ENCODE measurements at regions of chr7 and their contacts with region 1.

Region 1: DNA sequence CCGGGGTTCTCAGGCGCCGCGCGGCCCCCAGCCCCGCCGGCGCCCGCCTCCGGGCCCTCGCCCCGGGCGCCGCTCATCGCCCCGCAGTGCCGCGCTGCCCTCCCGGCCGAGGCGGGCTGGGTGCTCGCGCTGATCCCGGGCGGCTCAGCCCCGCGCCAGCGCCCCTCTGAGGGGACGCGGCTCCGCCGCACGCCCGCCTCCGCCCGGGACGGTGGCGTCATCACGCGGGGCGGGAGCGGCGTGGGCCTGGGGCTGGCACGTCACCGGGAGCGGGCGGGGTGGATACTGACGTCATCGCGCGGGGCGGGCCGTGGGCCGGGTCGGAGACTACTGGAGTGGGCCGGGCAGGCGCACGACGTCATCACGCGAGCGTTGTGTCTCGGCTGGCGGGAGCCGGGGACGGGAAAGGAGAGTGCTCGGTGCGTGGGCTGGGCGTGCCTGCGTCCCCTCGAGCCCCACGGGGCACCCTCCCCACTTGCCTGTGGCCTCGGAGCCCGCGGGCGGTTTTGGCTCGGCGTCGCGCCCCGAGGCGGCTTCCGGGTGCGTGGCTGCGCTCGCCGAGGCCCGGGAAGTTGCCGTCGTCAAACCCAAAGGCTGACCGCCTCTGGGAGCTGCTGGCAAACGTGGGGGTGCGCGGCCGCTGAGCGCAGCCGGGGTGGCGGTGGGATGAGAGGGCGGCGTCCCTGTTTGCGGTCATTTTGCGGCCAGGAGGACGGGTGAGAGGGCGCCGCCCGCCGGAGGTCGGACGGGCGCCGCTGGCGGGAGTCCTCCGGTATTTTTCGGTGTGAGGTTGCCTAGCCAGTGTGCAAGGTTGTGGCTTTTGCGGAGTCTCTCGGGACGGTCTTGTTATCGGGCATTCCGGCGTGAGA is at the start of gene ESYT2:
- DNase-seq: peak; percentile 95 to 100 (median 99)
- ATAC-seq: peak; percentile 78 to 85 (median 84)
- H3K4me3 ChIP-seq: peak within 1 kb of the TSS; percentile 71 to 75
- H3K4me3 Mint-ChIP-seq: peak within 1 kb of the TSS; percentile 97 to 99 (median 98)
- H3K27ac ChIP-seq: peak within 1 kb of the TSS; percentile 96
- H3K27ac Mint-ChIP-seq: peak within 1 kb of the TSS; percentile 83 to 94
- H3K4me1 ChIP-seq: peaks cover 14 to 32% of the 10 kb centered on the region in 2 experiments
- H3K4me1 Mint-ChIP-seq: peaks cover 26 to 46% (median 37%) of the 10 kb centered on the region in 3 donors
- H3K27me3 ChIP-seq: no peaks in the 10 kb centered on the region
- H3K27me3 Mint-ChIP-seq: no peaks in the 10 kb centered on the region
- total RNA-seq, gene ESYT2: 99.0 to 122 (median 116) TPM

Region 2: GRCh38 chr7:158754746-158755444 is 74.7 kb before region 1 on chr7:
- CTCF ChIA-PET with region 1: no interaction called
- POLR2A ChIA-PET with region 1: no interaction called
- DNase-seq: no peak
- ATAC-seq: no peak
- H3K4me3 ChIP-seq: no peak overlapping the region
- H3K4me3 Mint-ChIP-seq: no peak overlapping the region
- H3K27ac ChIP-seq: no peak overlapping the region
- H3K27ac Mint-ChIP-seq: no peak overlapping the region
- H3K4me1 ChIP-seq: no peaks in the 10 kb centered on the region
- H3K4me1 Mint-ChIP-seq: peaks cover 0 to 4% (median 0%) of the 10 kb centered on the region in 3 donors
- H3K27me3 ChIP-seq: no peaks in the 10 kb centered on the region
- H3K27me3 Mint-ChIP-seq: no peaks in the 10 kb centered on the region

Region 3: DNA sequence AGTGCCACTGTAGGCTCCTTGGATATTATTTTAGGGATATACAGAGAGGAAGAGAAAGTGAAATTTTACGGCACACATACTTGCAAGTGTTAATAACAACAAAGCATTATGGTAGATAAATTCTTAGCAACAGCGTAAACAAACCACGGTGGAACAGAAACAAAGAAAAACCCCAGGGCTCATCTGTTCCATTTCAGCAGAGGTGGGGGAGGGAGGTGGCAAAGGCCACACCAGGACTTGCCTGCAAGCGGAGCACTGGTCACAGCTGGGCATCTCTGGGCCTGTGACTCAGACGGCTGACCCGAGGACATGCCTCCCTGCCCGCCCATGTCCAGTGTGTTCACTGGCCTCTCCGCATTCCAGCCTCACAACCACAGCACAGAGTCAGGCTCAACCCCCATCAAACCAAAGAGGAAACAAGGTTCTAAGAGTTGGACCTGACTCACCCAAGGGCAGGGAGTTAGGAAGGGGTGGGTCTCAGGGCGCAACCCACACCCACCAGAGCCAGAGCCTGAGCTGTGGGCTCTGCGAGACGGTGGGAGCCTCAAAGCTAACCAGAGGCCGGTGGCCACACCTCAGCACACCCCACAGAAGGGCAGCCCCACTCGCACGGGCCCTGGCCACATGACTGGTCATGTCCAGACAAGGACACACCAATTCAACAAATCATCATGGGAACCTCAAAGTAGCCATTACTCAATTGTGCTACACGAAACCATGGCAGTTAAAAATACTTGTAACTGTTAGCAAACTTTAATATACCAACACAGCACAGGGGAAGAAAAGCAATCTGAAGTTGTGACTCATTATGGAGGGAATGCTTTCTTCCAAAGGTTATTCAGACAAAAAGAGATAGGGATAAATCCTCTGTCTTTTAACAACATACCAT is 11.0 kb before region 1 on chr7:
- CTCF ChIA-PET with region 1: interaction called, 3 to 9 read pairs
- POLR2A ChIA-PET with region 1: interaction called, 12 to 124 read pairs
- DNase-seq: peak in 34 of 35 experiments; percentile 42 to 89 (median 68)
- ATAC-seq: peak; percentile 70 to 78 (median 74)
- H3K4me3 ChIP-seq: peak overlapping the region; percentile 35 to 40
- H3K4me3 Mint-ChIP-seq: peak overlapping the region; percentile 84 to 88 (median 87)
- H3K27ac ChIP-seq: peak overlapping the region; percentile 99
- H3K27ac Mint-ChIP-seq: peak overlapping the region; percentile 95 to 98
- H3K4me1 ChIP-seq: peaks cover 60 to 73% of the 10 kb centered on the region in 2 experiments
- H3K4me1 Mint-ChIP-seq: peaks cover 89 to 90% (median 90%) of the 10 kb centered on the region in 3 donors
- H3K27me3 ChIP-seq: no peaks in the 10 kb centered on the region
- H3K27me3 Mint-ChIP-seq: no peaks in the 10 kb centered on the region

Region 4: DNA sequence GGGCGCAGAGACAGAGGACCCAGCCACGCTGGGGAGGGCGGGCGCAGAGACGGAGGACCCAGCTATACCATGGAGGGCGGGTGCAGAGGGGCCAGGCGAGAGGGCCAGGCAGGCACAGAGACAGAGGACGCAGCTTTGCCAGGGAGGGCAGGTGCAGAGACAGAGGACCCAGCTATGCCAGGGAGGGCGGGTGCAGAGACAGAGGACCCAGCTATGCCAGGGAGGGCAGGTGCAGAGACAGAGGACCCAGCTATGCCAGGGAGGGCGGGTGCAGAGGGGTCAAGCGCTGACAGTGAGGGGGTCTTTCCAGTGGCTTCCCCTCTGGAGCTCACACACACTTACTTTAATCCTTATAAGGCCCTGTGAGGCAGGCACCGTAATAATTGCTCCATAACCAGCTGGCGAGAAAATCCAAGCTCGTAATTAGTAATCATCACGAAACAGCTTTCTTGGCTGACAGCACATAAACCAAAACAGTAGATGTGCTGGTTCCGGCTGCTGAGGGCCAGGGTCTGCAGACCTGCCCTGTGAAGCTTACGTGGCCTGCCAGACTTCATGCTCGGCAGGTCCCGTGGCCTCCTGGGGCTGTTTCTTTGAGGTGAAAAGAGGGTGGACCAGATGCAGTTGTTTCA is 177.9 kb after region 1 on chr7:
- CTCF ChIA-PET with region 1: no interaction called
- POLR2A ChIA-PET with region 1: no interaction called
- DNase-seq: no peak
- ATAC-seq: no peak
- H3K4me3 ChIP-seq: no peak overlapping the region
- H3K4me3 Mint-ChIP-seq: no peak overlapping the region
- H3K27ac ChIP-seq: no peak overlapping the region
- H3K27ac Mint-ChIP-seq: no peak overlapping the region
- H3K4me1 ChIP-seq: peaks cover 7 to 8% of the 10 kb centered on the region in 2 experiments
- H3K4me1 Mint-ChIP-seq: peaks cover 5 to 18% (median 15%) of the 10 kb centered on the region in 3 donors
- H3K27me3 ChIP-seq: peaks cover 0 to 14% of the 10 kb centered on the region in 2 experiments
- H3K27me3 Mint-ChIP-seq: peaks cover 2 to 3% of the 10 kb centered on the region in 2 donors

Region 5: GRCh38 chr7:159036916-159037605 is 207.5 kb after region 1 on chr7:
- CTCF ChIA-PET with region 1: no interaction called
- POLR2A ChIA-PET with region 1: no interaction called
- DNase-seq: peak in 2 of 35 experiments; percentile 1 to 20
- ATAC-seq: no peak
- H3K4me3 ChIP-seq: no peak overlapping the region
- H3K4me3 Mint-ChIP-seq: no peak overlapping the region
- H3K27ac ChIP-seq: no peak overlapping the region
- H3K27ac Mint-ChIP-seq: no peak overlapping the region
- H3K4me1 ChIP-seq: no peaks in the 10 kb centered on the region
- H3K4me1 Mint-ChIP-seq: no peaks in the 10 kb centered on the region
- H3K27me3 ChIP-seq: peaks cover 0 to 32% of the 10 kb centered on the region in 2 experiments
- H3K27me3 Mint-ChIP-seq: peaks cover 3 to 21% of the 10 kb centered on the region in 2 donors